Mammary epithelial cell (primary cell): ENCODE measurements at regions of chr20 and their contacts with region 1.

Region 1: DNA sequence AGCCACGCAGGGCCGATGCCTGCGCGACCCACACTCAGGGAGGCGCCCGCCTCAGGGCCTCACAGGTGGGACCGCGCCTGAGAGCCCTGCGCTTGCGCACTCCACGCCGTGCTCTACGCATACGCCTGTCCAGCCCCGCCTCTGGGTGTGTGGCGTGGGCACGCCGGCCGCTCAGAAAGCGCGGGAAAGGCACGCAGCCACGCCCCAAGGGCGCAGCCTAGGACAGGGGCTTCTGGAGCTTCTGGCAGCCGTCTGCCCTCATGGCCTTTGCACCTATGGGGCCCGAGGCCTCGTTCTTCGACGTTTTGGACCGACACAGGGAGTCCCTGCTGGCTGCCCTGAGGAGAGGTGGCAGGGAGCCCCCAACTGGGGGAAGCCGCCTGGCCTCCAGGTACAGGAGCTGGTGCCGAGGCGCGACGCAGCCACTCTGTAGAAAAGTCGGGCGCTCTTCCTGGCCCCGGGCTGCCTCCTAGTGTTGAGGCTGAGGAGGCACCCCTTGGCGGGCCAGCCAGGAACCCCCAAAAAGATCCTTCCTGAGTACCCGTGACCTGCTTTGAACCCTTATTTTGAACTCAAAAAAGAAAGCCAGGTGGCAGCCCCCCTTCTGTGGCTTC is at the start of gene SPO11:
- DNase-seq: no peak
- H3K4me3 ChIP-seq: no peak within 1 kb of the TSS
- H3K27ac ChIP-seq: no peak within 1 kb of the TSS
- H3K4me1 ChIP-seq: peaks cover 15% of the 10 kb centered on the region
- H3K27me3 ChIP-seq: no peaks in the 10 kb centered on the region
- CTCF ChIP-seq: peak in 1 of 2 donors; percentile 37
- total RNA-seq, gene SPO11: not detected

Region 2: GRCh38 chr20:57244627-57245214 is 85.0 kb before region 1 on chr20:
- CTCF ChIA-PET with region 1: no interaction called
- dilution Hi-C with region 1: no loop called
- in situ Hi-C with region 1: no loop called
- intact Hi-C with region 1: loop called (anchors 1 kb)
- DNase-seq: no peak
- H3K4me3 ChIP-seq: no peak overlapping the region
- H3K27ac ChIP-seq: no peak overlapping the region
- H3K4me1 ChIP-seq: peaks cover 6% of the 10 kb centered on the region
- H3K27me3 ChIP-seq: peaks cover 2% of the 10 kb centered on the region
- CTCF ChIP-seq: peak in 1 of 2 donors; percentile 10

Region 3: GRCh38 chr20:57275806-57276205 is 53.9 kb before region 1 on chr20:
- CTCF ChIA-PET with region 1: no interaction called
- dilution Hi-C with region 1: no loop called
- in situ Hi-C with region 1: no loop called
- intact Hi-C with region 1: loop called (anchors 5 kb)
- DNase-seq: peak; percentile 63
- H3K4me3 ChIP-seq: no peak overlapping the region
- H3K27ac ChIP-seq: no peak overlapping the region
- H3K4me1 ChIP-seq: no peaks in the 10 kb centered on the region
- H3K27me3 ChIP-seq: peaks cover 7% of the 10 kb centered on the region
- CTCF ChIP-seq: no peak

Region 4: DNA sequence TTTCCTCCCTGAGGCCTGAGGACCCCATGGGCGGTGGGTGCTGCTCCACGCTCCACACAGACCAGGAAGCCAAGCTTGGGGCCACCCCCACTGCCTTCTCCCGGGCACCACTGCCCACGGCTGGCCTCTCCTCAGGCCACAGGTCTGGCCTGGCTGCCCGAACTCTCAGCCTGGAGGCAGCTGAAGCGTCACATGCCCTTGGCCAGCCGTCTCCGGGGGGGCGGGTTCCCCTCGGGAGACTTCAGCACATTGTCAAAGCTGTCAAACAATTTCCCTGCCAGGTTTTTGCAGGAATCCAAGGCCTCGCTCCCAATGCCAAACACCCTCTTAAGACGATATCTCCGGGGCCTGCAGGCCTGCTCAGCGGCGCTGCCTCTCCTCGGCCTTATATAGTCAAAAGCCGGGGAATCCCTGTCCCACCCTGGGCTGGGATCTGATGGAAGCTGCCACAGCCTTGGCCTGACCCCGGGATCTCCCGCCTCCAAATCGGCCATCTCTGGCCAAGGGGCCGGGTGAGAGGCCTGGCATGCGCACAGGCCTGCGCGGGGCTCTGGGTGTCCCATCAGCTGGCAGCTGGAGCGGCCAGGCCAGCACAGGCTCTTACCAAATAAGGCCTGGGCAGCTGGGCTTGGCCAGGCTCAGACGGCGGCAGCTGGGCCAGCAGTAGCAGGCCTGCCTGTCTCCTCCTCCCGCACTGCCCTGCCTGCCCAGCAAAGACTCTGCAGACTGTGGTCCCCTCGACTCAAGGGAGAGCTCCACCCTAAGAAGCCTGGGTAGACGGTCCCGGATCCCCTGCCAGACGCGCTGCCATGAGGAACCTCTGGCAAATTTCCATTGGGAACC is 111.2 kb after region 1 on chr20:
- CTCF ChIA-PET with region 1: no interaction called
- dilution Hi-C with region 1: no loop called
- in situ Hi-C with region 1: no loop called
- intact Hi-C with region 1: no loop called
- DNase-seq: no peak
- H3K4me3 ChIP-seq: no peak overlapping the region
- H3K27ac ChIP-seq: no peak overlapping the region
- H3K4me1 ChIP-seq: peaks cover 10% of the 10 kb centered on the region
- H3K27me3 ChIP-seq: no peaks in the 10 kb centered on the region
- CTCF ChIP-seq: no peak